PC-9 (cell line): ENCODE measurements at regions of chr2 and their contacts with region 1.

Region 1: DNA sequence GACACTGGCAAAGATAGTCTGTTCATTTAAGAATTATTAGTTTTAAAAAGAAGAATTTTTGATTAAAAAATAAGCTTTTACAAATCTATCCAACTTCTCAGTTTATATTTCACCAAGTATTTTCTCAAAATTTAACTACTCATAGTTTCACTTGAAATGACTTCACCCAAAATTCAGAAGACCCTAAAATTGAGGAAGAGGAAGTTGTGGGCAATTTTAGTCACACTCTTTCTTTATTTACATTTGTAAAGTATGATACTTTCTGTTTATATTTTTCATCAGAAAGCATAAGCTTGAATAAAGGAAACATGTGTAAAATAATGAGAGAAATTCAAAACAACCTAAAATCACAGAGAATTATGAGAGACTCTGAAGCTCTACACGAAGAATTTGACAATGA is 278.8 kb upstream of the MEIS1 start:
- DNase-seq: no peak
- H3K4me3 ChIP-seq: no peak overlapping the region
- H3K27ac ChIP-seq: no peak overlapping the region
- H3K4me1 ChIP-seq: no peaks in the 10 kb centered on the region
- H3K27me3 ChIP-seq: no peaks in the 10 kb centered on the region
- CTCF ChIP-seq: no peak

Region 2: GRCh38 chr2:65880436-65881163 is 275.6 kb before region 1 on chr2:
- CTCF ChIA-PET with region 1: no interaction called
- POLR2A ChIA-PET with region 1: no interaction called
- intact Hi-C with region 1: no loop called
- DNase-seq: no peak
- H3K4me3 ChIP-seq: no peak overlapping the region
- H3K27ac ChIP-seq: no peak overlapping the region
- H3K4me1 ChIP-seq: no peaks in the 10 kb centered on the region
- H3K27me3 ChIP-seq: no peaks in the 10 kb centered on the region
- CTCF ChIP-seq: no peak

Region 3: GRCh38 chr2:66105066-66105753 is 51.0 kb before region 1 on chr2:
- CTCF ChIA-PET with region 1: no interaction called
- POLR2A ChIA-PET with region 1: no interaction called
- intact Hi-C with region 1: no loop called
- DNase-seq: no peak
- H3K4me3 ChIP-seq: no peak overlapping the region
- H3K27ac ChIP-seq: no peak overlapping the region
- H3K4me1 ChIP-seq: no peaks in the 10 kb centered on the region
- H3K27me3 ChIP-seq: no peaks in the 10 kb centered on the region
- CTCF ChIP-seq: no peak

Region 4: GRCh38 chr2:66127648-66128047 is 28.5 kb before region 1 on chr2:
- CTCF ChIA-PET with region 1: no interaction called
- POLR2A ChIA-PET with region 1: no interaction called
- intact Hi-C with region 1: loop called (anchors 2 kb)
- DNase-seq: no peak
- H3K4me3 ChIP-seq: no peak overlapping the region
- H3K27ac ChIP-seq: no peak overlapping the region
- H3K4me1 ChIP-seq: no peaks in the 10 kb centered on the region
- H3K27me3 ChIP-seq: no peaks in the 10 kb centered on the region; the same call in 1 of the 2 replicates
- CTCF ChIP-seq: no peak